ENCODE measurements at regions of chr18 and their contacts with region 1.

Region 1: GRCh38 chr18:28236487-28236886 is 59.6 kb upstream of the CDH2 start:
- DNase-seq: no peak
- H3K4me3 ChIP-seq: no peak overlapping the region
- H3K27ac ChIP-seq: no peak overlapping the region
- H3K4me1 ChIP-seq: no peaks in the 10 kb centered on the region
- H3K27me3 ChIP-seq: no peaks in the 10 kb centered on the region
- CTCF ChIP-seq: no peak

Region 2: DNA sequence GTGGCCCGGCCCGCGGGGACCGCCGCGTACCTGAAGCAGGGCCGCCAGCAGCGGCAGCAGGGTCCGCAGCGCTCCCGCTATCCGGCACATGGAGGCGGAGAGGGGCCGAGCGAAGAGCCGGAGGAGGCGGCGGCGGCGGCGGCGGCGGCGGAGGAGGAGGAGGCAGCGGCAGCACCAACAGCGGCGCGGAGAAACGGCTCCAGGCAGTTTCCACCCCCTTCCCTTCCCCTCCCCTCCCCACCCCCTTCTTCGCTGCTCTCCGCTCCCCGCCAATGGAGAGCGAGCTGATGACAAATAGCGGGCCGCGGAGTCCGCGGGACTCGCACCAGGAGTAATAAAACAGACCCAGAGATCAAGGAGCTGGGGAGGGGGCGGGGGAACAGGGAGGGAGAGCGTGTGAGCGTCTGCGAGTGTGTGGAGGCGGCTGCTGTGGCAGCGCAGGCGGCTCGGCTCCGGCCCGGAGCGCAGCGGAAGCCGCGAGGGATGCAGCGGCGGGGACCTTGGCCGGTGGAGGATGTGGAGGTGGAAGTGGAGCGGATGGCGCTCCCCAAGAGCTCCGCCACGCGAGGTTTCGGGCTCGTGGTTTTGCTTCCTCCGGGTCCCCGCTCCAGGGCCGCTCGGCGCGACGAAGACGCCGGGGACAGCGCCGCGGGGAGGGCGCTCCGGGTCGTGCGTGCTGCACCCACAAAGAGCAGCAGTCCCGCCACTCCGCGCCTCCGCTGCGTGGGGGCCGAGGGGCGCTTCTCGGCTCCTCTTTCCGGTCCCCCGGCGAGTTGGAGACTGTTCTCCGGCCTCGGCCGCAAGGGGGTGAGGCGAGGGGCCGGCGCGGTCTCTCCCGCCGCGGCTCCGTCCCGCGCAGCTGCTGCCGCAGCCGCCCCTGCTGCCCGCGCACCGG is 59.3 kb before region 1 on chr18 and contains the start of gene CDH2:
- intact Hi-C with region 1: loop called (anchors 10 kb)
- DNase-seq: no peak
- H3K4me3 ChIP-seq: peak within 1 kb of the TSS; percentile 34
- H3K27ac ChIP-seq: no peak within 1 kb of the TSS
- H3K4me1 ChIP-seq: no peaks in the 10 kb centered on the region
- H3K27me3 ChIP-seq: peaks cover 44% of the 10 kb centered on the region
- CTCF ChIP-seq: no peak
- total RNA-seq, gene CDH2: 0.84 to 1.4 TPM

Measured in colonic mucosa (tissue), 4 donors.